CD8-positive, alpha-beta memory T cell (primary cell): ENCODE measurements at regions of chr1 and their contacts with region 1.

Region 1: DNA sequence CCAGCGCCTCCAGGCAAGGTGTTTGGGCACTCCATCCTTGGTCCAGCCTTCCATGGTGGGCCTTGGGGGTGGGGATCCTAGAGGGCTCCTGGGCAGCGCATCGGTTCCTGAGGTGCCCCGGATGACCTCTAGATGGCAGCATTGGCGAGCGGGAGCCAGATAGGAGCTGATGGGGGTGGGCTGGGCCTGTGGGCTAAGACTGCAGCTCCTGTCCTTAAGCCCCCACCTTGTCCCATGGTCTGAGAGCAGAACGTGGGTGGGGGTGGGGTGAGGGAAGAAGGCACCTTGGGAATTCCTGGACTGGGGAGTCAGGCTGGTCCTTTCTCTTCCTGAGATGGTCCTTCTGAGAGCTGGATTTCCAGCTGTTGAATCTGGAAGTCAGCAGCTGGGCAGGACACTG is 93.4 kb upstream of the CSF3R start:
- DNase-seq: peak; percentile 13 to 52 (median 37)
- H3K4me3 ChIP-seq: no peak overlapping the region
- H3K4me3 Mint-ChIP-seq: no peak overlapping the region
- H3K27ac ChIP-seq: no peak overlapping the region
- H3K27ac Mint-ChIP-seq: peak overlapping the region in 2 of 8 donors; percentile 3 to 47
- H3K4me1 ChIP-seq: no peaks in the 10 kb centered on the region
- H3K4me1 Mint-ChIP-seq: no peaks in the 10 kb centered on the region
- H3K27me3 ChIP-seq: no peaks in the 10 kb centered on the region
- H3K27me3 Mint-ChIP-seq: peaks cover 27 to 41% of the 10 kb centered on the region in 2 donors

Region 2: GRCh38 chr1:36342481-36343478 is 233.3 kb before region 1 on chr1:
- CTCF ChIA-PET with region 1: no interaction called
- POLR2A ChIA-PET with region 1: no interaction called
- DNase-seq: peak; percentile 41 to 70 (median 46)
- H3K4me3 ChIP-seq: no peak overlapping the region
- H3K4me3 Mint-ChIP-seq: no peak overlapping the region
- H3K27ac ChIP-seq: no peak overlapping the region
- H3K27ac Mint-ChIP-seq: peak overlapping the region in 4 of 8 donors; percentile 17 to 66 (median 55)
- H3K4me1 ChIP-seq: peaks cover 10% of the 10 kb centered on the region
- H3K4me1 Mint-ChIP-seq: peaks cover 3 to 9% (median 4%) of the 10 kb centered on the region in 3 donors
- H3K27me3 ChIP-seq: no peaks in the 10 kb centered on the region
- H3K27me3 Mint-ChIP-seq: no peaks in the 10 kb centered on the region

Region 3: DNA sequence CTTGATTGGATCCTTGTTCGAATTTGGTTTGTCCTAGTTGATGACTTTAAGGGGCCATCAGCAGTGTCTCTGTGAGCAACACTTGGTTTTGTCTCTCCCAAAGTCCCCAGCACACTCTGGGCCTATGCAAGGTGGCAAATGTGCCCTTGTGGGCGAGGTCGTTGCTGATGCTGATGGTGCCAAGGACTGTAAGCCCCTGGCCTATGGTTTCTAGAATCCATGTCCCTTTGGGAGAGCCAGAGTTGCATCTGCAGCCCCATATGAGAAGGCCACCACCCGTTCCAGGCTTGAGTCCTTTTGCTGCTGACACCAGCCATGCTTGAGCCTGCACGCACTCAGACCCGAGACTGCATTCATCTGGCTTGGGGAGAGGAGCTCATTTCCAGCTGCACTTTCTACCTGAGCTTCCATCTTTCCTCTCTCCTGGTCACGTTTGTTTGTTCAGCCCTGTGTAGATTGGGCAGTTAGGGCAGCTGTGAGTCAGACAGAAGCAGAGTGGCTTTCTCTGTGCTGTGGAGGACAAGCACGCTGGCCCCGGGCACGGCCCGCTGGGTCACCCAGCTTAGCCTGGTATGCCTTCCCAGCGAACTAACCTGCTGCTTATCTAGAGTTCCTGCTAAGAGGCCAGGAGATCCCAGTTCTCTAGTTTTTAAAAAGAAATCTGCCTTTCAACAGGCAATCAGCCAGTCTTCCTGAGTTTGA is 41.3 kb before region 1 on chr1:
- CTCF ChIA-PET with region 1: no interaction called
- POLR2A ChIA-PET with region 1: no interaction called
- DNase-seq: no peak
- H3K4me3 ChIP-seq: no peak overlapping the region
- H3K4me3 Mint-ChIP-seq: no peak overlapping the region
- H3K27ac ChIP-seq: no peak overlapping the region
- H3K27ac Mint-ChIP-seq: no peak overlapping the region
- H3K4me1 ChIP-seq: no peaks in the 10 kb centered on the region
- H3K4me1 Mint-ChIP-seq: no peaks in the 10 kb centered on the region
- H3K27me3 ChIP-seq: no peaks in the 10 kb centered on the region
- H3K27me3 Mint-ChIP-seq: peaks cover 12 to 46% of the 10 kb centered on the region in 2 donors

Region 4: GRCh38 chr1:36565576-36566501 is 10.3 kb before region 1 on chr1:
- CTCF ChIA-PET with region 1: interaction called, 5 read pairs
- POLR2A ChIA-PET with region 1: interaction called, 12 read pairs
- DNase-seq: no peak
- H3K4me3 ChIP-seq: no peak overlapping the region
- H3K4me3 Mint-ChIP-seq: no peak overlapping the region
- H3K27ac ChIP-seq: no peak overlapping the region
- H3K27ac Mint-ChIP-seq: no peak overlapping the region
- H3K4me1 ChIP-seq: no peaks in the 10 kb centered on the region
- H3K4me1 Mint-ChIP-seq: no peaks in the 10 kb centered on the region
- H3K27me3 ChIP-seq: no peaks in the 10 kb centered on the region
- H3K27me3 Mint-ChIP-seq: peaks cover 0 to 13% of the 10 kb centered on the region in 2 donors

Region 5: GRCh38 chr1:37434292-37434907 is 858.3 kb after region 1 on chr1:
- CTCF ChIA-PET with region 1: interaction called, 10 read pairs
- POLR2A ChIA-PET with region 1: no interaction called
- DNase-seq: peak; percentile 24 to 76 (median 54)
- H3K4me3 ChIP-seq: no peak overlapping the region
- H3K4me3 Mint-ChIP-seq: no peak overlapping the region
- H3K27ac ChIP-seq: no peak overlapping the region
- H3K27ac Mint-ChIP-seq: no peak overlapping the region
- H3K4me1 ChIP-seq: no peaks in the 10 kb centered on the region
- H3K4me1 Mint-ChIP-seq: no peaks in the 10 kb centered on the region
- H3K27me3 ChIP-seq: no peaks in the 10 kb centered on the region
- H3K27me3 Mint-ChIP-seq: peaks cover 21 to 51% of the 10 kb centered on the region in 2 donors